ENCODE measurements at regions of chr9 and their contacts with region 1.

Region 1: GRCh38 chr9:127785023-127785932 is 556 bp upstream of the CDK9 start:
- DNase-seq: peak in 1 of 2 donors; percentile 93
- H3K4me3 ChIP-seq: peak overlapping the region; percentile 84 to 89
- H3K27ac ChIP-seq: peak overlapping the region; percentile 91 to 94
- H3K4me1 ChIP-seq: peaks cover 13 to 38% of the 10 kb centered on the region in 2 donors
- H3K27me3 ChIP-seq: no peaks in the 10 kb centered on the region
- CTCF ChIP-seq: peak; percentile 96 to 99 (median 99)

Region 2: GRCh38 chr9:127586537-127586936 is 198.7 kb before region 1 on chr9:
- intact Hi-C with region 1: loop called (anchors 2 kb)
- DNase-seq: peak in 1 of 2 donors; percentile 92
- H3K4me3 ChIP-seq: no peak overlapping the region
- H3K27ac ChIP-seq: no peak overlapping the region
- H3K4me1 ChIP-seq: peaks cover 0 to 9% of the 10 kb centered on the region in 2 donors
- H3K27me3 ChIP-seq: no peaks in the 10 kb centered on the region
- CTCF ChIP-seq: peak; percentile 78 to 96 (median 89)

Region 3: GRCh38 chr9:127715394-127716337 is 69.6 kb before region 1 on chr9 and contains the starts of genes PTRH1 and TTC16:
- intact Hi-C with region 1: loop called (anchors 2 kb)
- DNase-seq: peak; percentile 84 to 99
- H3K4me3 ChIP-seq: peak within 1 kb of the TSS; percentile 61 to 93
- H3K27ac ChIP-seq: peak within 1 kb of the TSS; percentile 82 to 85
- H3K4me1 ChIP-seq: peaks cover 0 to 10% of the 10 kb centered on the region in 2 donors
- H3K27me3 ChIP-seq: no peaks in the 10 kb centered on the region
- CTCF ChIP-seq: no peak
- total RNA-seq, gene PTRH1: 5.4 TPM
- total RNA-seq, gene TTC16: not detected

Region 4: DNA sequence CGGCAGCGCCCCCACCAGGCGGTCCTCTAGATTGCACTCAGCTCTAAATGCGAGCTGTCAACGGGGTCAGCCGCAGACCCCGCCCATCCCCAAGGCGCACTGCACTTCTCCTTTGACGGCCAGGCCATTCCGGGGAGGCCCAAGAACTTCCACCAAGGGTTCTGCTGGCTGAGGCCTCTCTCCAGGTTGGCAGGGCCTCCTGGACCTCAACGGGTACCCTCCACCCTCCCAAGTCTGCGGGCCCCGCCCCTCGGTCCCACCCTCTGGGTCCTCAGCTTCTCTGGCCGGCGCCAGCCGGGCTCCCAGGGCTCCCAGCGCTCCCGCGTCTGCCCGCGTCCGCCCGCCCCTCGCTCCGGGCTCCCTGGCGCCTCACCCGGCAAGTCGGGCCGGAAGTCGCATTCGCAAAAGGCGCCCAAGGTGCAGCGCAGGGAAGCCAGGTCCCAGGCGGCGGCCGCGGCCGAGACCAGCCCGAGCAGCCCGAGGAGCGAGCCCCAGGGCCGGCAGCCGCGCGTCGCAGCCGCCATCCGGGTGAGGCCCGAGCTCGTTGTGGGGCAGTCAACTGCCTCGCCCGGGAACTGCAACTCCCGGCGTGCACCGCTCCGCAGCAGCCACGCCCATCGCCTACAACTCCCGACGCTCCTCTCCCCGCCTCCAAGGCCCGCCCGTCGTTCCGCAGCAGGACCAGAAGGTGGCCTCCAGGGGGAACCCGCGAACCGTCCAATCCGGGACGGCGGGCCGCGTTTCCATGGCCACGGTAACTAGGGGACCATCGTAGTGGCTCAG is 50.3 kb before region 1 on chr9 and contains the start of gene TOR2A:
- intact Hi-C with region 1: loop called (anchors 1 kb)
- DNase-seq: peak; percentile 80 to 99
- H3K4me3 ChIP-seq: peak within 1 kb of the TSS; percentile 73 to 80
- H3K27ac ChIP-seq: peak within 1 kb of the TSS; percentile 92 to 97
- H3K4me1 ChIP-seq: peaks cover 6 to 7% of the 10 kb centered on the region in 2 donors
- H3K27me3 ChIP-seq: no peaks in the 10 kb centered on the region
- CTCF ChIP-seq: peak; percentile 93 to 99 (median 97)
- total RNA-seq, gene TOR2A: not detected

Region 5: DNA sequence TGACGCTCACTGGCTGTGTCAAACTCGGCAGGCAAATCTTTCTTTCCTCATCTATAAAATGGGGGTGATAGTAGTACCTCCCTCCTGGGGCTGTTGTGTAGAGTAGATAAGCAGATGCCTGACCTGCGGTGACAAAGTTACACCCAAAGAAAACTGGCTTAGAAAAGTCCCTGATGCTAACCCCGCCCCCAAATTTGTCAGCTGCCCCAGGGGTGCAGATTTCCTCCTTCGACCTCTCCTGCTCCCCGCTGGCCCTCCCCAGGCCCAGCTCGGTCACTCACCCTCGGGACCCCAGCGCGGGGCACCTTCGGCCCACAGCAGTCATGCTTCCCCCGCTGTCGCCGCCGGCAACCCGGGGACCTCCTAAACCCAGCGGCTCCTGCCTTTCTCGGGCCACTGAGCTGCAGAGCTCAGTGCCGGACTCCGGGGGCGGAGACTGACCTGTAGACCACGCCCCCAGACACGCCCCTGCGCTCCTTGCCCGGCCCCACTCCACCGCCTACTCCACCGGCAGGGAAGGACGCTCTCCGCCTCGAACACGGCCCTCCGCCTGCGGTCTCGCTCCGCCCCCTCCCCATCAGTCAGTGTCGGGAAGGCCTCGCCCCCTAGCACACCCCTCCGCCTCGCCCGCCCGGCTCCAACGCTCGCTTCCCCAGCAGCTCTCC is 14.2 kb before region 1 on chr9:
- intact Hi-C with region 1: loop called (anchors 1 kb)
- DNase-seq: peak; percentile 94 to 99
- H3K4me3 ChIP-seq: peak overlapping the region; percentile 62 to 64
- H3K27ac ChIP-seq: peak overlapping the region in 1 of 2 donors; percentile 59
- H3K4me1 ChIP-seq: peaks cover 3 to 8% of the 10 kb centered on the region in 2 donors
- H3K27me3 ChIP-seq: no peaks in the 10 kb centered on the region
- CTCF ChIP-seq: no peak

Region 6: DNA sequence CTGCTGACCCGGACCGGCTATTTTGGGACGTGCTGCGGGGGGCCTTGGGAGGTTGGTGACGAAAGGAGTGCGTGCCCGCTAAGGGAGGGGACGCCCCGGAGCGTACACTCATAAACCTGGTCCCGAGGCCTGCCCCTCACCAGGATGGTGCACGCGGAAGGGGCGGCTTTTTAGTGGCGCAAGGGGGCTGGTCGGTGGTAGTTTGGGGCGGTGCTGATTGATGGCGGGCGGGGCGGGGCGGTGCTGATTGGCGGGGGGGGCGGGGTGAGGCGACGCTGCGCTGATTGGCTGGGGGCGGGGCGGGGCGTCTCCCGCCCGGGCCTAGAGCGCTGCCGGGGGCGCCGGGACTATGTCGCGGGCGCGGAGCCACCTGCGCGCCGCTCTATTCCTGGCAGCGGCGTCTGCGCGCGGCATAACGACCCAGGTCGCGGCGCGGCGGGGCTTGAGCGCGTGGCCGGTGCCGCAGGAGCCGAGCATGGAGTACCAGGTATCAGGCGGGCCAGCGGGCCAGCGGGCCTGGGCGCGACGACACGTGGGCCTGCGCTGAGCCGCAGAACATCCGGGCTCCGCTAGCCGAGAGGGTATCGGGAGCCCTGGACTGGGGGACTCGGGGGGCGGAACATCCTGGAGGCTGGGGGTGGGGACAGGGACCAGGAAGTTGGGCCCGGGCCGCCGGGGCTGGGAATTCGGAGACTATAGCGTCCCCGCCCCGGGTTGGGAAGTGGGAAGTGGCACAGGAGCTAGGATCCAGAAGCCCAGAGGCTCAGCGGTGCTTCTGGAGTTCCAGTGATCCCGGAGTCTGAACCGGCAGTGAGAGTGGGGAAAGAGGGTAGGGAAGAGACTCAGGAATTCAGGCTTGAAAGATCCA is 17.5 kb after region 1 on chr9 and contains the start of gene FPGS:
- intact Hi-C with region 1: loop called (anchors 1 kb)
- DNase-seq: peak; percentile 70 to 95
- H3K4me3 ChIP-seq: peak within 1 kb of the TSS; percentile 73 to 83
- H3K27ac ChIP-seq: peak within 1 kb of the TSS; percentile 92 to 99
- H3K4me1 ChIP-seq: peaks cover 21 to 31% of the 10 kb centered on the region in 2 donors
- H3K27me3 ChIP-seq: no peaks in the 10 kb centered on the region
- CTCF ChIP-seq: no peak
- total RNA-seq, gene FPGS: 286 TPM

Region 7: GRCh38 chr9:127877566-127877998 is 92.3 kb after region 1 on chr9 and contains the start of gene AK1:
- intact Hi-C with region 1: loop called (anchors 1 kb)
- DNase-seq: peak in 1 of 2 donors; percentile 89
- H3K4me3 ChIP-seq: peak within 1 kb of the TSS; percentile 65 to 67
- H3K27ac ChIP-seq: peak within 1 kb of the TSS; percentile 76 to 80
- H3K4me1 ChIP-seq: peaks cover 24 to 44% of the 10 kb centered on the region in 2 donors
- H3K27me3 ChIP-seq: no peaks in the 10 kb centered on the region
- CTCF ChIP-seq: no peak
- total RNA-seq, gene AK1: 64.5 TPM

Measured in ascending aorta (tissue), 2 donors.